Calu3 (cell line): ENCODE measurements at regions of chrX and their contacts with region 1.

Region 1: GRCh38 chrX:140050906-140051305 is 85.6 kb upstream of the CXorf66 start:
- DNase-seq: no peak
- H3K4me3 Mint-ChIP-seq: no peak overlapping the region
- H3K27ac Mint-ChIP-seq: no peak overlapping the region
- H3K4me1 Mint-ChIP-seq: no peaks in the 10 kb centered on the region
- H3K27me3 Mint-ChIP-seq: no peaks in the 10 kb centered on the region
- CTCF ChIP-seq: no peak

Region 2: DNA sequence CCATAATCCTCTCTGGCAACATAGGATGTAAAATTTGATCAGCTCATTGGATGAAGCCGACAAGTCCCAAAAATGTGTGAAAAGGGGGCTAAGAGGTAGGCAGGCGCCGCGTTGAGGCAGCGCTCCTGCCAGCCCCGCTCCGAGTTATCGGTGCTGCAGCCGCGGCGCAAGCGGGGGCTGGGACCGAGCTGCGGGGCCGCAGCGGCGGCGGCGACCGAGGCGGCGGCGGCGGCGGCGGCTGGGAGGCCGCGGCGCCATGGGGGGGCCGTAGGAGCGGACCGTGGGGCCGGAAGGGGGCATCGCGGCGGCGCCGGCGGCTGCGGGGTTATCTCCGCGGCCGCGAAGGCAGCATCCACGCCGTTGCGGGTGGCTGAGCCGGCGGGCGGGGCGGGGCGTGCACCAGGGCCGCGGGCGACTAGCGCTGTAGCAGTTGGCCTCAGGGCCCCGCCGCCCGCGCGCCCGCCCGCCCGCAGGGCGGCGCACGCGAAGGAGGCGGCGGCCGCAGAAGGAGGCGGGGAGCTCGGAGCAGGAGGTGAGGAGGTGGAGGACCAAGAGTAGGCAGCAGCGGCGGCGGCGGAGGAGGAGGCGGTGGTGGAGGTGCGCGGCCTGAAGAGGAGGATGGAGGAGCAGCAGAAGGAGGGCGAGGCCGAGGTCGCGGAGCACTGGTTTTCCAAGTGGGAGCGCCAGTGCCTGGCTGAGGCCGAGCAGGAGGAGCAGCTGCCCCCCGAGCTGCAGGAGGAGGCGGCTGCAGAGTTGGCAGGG is 40.4 kb after region 1 on chrX:
- CTCF ChIA-PET with region 1: no interaction called
- intact Hi-C with region 1: no loop called
- DNase-seq: no peak
- H3K4me3 Mint-ChIP-seq: no peak overlapping the region
- H3K27ac Mint-ChIP-seq: no peak overlapping the region
- H3K4me1 Mint-ChIP-seq: no peaks in the 10 kb centered on the region
- H3K27me3 Mint-ChIP-seq: peaks cover 13% of the 10 kb centered on the region
- CTCF ChIP-seq: no peak

Region 3: GRCh38 chrX:140141444-140142029 is 90.6 kb after region 1 on chrX:
- CTCF ChIA-PET with region 1: no interaction called
- intact Hi-C with region 1: loop called (anchors 2 kb)
- DNase-seq: peak; percentile 48
- H3K4me3 Mint-ChIP-seq: no peak overlapping the region
- H3K27ac Mint-ChIP-seq: no peak overlapping the region
- H3K4me1 Mint-ChIP-seq: no peaks in the 10 kb centered on the region
- H3K27me3 Mint-ChIP-seq: no peaks in the 10 kb centered on the region
- CTCF ChIP-seq: peak; percentile 37

Region 4: GRCh38 chrX:140229187-140229586 is 178.3 kb after region 1 on chrX:
- CTCF ChIA-PET with region 1: no interaction called
- intact Hi-C with region 1: loop called (anchors 5 kb)
- DNase-seq: no peak
- H3K4me3 Mint-ChIP-seq: no peak overlapping the region
- H3K27ac Mint-ChIP-seq: no peak overlapping the region
- H3K4me1 Mint-ChIP-seq: no peaks in the 10 kb centered on the region
- H3K27me3 Mint-ChIP-seq: no peaks in the 10 kb centered on the region
- CTCF ChIP-seq: no peak

Region 5: GRCh38 chrX:140664939-140665338 is 614.0 kb after region 1 on chrX:
- CTCF ChIA-PET with region 1: no interaction called
- intact Hi-C with region 1: loop called (anchors 1 kb)
- DNase-seq: no peak
- H3K4me3 Mint-ChIP-seq: no peak overlapping the region
- H3K27ac Mint-ChIP-seq: no peak overlapping the region
- H3K4me1 Mint-ChIP-seq: no peaks in the 10 kb centered on the region
- H3K27me3 Mint-ChIP-seq: no peaks in the 10 kb centered on the region
- CTCF ChIP-seq: no peak

Region 6: GRCh38 chrX:140733769-140734342 is 683.0 kb after region 1 on chrX:
- CTCF ChIA-PET with region 1: no interaction called
- intact Hi-C with region 1: loop called (anchors 5 kb)
- DNase-seq: peak; percentile 2
- H3K4me3 Mint-ChIP-seq: no peak overlapping the region
- H3K27ac Mint-ChIP-seq: no peak overlapping the region
- H3K4me1 Mint-ChIP-seq: no peaks in the 10 kb centered on the region
- H3K27me3 Mint-ChIP-seq: no peaks in the 10 kb centered on the region
- CTCF ChIP-seq: peak; percentile 41